Esophagus muscularis mucosa (tissue), 4 donors: ENCODE measurements at regions of chr10 and their contacts with region 1.

Region 1: GRCh38 chr10:36880898-36881297 is 244.5 kb upstream of the ANKRD30A start:
- DNase-seq: no peak
- H3K4me3 ChIP-seq: no peak overlapping the region
- H3K27ac ChIP-seq: no peak overlapping the region
- H3K4me1 ChIP-seq: peaks cover 0 to 6% (median 0%) of the 10 kb centered on the region in 4 donors
- H3K27me3 ChIP-seq: no peaks in the 10 kb centered on the region
- CTCF ChIP-seq: peak; percentile 52 to 63 (median 53)
- EP300 ChIP-seq: no peak
- POLR2A ChIP-seq: no peak

Region 2: DNA sequence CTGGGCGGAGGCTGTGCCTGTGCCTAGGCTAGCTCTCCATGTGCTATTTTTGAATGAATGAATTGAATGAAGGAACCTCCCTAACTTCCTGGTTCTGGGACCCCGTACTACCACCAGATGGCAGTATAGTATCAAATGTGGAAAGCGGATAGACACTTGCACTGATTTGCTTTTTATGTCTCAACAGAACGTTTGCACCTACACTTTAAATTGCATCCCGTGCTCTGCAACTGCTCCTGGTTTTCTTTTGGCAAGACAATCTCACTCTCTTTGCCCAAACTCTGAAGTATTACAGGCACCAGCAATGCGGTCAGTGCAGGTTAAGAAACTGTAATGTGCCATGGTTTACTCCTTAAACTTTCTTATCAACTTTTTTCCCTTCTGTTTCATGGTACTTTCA is 1245.3 kb before region 1 on chr10:
- intact Hi-C with region 1: loop called (anchors 5 kb)
- DNase-seq: no peak
- H3K4me3 ChIP-seq: no peak overlapping the region
- H3K27ac ChIP-seq: no peak overlapping the region
- H3K4me1 ChIP-seq: peaks cover 22 to 49% (median 28%) of the 10 kb centered on the region in 4 donors
- H3K27me3 ChIP-seq: no peaks in the 10 kb centered on the region
- CTCF ChIP-seq: peak; percentile 84 to 95 (median 90)
- EP300 ChIP-seq: no peak
- POLR2A ChIP-seq: no peak

Region 3: DNA sequence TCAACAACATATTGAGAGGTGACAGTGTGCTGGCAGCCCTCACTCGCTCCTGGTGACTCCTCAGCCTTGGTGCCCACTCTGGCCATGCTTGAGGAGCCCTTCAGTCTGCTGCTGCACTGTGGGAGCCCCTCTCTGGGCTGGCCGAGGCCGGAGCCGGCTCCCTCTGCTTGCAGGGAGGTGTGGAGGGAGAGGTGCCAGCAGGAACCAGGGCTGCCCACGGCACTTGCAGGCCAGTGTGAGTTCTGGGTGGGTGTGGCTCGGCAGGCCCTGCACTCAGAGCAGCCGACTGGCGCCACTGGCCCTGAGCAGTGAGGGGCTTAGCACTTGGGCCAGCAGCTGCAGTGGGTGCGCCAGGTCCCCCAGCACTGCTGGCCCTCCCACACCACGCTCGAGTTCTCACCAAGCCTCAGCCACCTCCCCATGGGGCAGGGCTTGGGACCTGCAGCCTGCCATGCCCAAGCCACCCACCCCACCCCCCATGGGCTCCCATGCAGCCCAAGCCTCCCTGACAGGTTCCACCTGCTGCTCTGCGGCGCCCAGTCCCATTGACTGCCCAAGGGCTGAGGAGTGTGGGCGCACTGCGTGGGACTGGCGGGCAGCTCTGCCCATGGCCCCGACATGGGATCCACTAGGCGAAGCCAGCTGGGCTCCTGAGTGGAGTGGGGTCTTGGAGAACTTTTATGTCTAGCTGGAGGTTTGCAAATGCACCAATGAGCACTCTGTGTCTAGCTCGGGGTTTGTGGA is 132.6 kb before region 1 on chr10:
- intact Hi-C with region 1: no loop called
- DNase-seq: no peak
- H3K4me3 ChIP-seq: no peak overlapping the region
- H3K27ac ChIP-seq: no peak overlapping the region
- H3K4me1 ChIP-seq: no peaks in the 10 kb centered on the region
- H3K27me3 ChIP-seq: no peaks in the 10 kb centered on the region
- CTCF ChIP-seq: no peak
- EP300 ChIP-seq: no peak
- POLR2A ChIP-seq: no peak

Region 4: DNA sequence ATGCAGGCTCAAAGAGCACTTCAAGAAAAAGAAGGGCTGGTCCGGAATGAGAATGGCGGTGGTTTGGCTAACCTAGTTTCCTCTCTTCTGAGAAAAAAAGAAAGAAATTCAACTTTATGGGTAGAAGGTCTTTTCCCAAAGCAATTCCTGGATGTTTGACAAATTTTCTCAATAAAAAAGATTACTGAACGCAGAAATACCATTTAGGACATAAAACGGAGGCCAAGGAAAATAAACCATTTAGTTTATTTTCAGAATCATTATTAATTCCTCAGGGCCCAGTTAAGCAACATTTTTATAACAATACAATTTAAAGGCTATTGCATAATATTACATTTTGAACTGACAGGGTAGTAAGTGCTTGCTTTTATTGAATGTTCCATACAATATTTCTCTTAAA is 40.1 kb before region 1 on chr10:
- intact Hi-C with region 1: no loop called
- DNase-seq: no peak
- H3K4me3 ChIP-seq: no peak overlapping the region
- H3K27ac ChIP-seq: no peak overlapping the region
- H3K4me1 ChIP-seq: peaks cover 0 to 5% (median 0%) of the 10 kb centered on the region in 4 donors
- H3K27me3 ChIP-seq: no peaks in the 10 kb centered on the region
- CTCF ChIP-seq: no peak
- EP300 ChIP-seq: no peak
- POLR2A ChIP-seq: no peak